Activated CD4-positive, alpha-beta T cell treated with anti-CD3 and anti-CD28 coated beads, Interleukin-2, amount 10 ng/mL, durations not matched to agents 24 days and 14 days (primary cell): ENCODE measurements at regions of chr1 and their contacts with region 1.

Region 1: DNA sequence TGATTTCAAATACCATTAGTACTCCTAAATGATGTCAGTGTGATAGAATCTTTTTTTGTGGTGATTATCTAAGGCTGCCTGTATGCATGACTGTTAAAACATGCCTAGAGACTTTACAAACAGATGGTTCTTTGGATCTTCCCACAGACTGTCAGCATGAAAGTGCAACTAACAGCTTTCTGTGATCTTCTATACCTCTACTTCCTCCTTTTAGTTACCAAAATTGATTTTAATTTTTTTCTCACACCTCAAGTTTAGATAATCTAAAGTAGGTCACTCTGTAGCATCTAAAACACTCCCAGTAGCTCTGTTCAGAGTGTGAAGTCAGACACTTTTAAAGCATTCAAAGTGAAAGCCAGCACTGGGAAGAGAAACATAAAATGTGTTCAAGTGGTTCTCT is 534.5 kb downstream of the PTPRC start:
- DNase-seq: peak; percentile 79
- H3K4me3 Mint-ChIP-seq: peak overlapping the region; percentile 16
- H3K27ac Mint-ChIP-seq: peak overlapping the region; percentile 60
- H3K4me1 Mint-ChIP-seq: peaks cover 44% of the 10 kb centered on the region
- H3K27me3 Mint-ChIP-seq: peaks cover 7% of the 10 kb centered on the region

Region 2: DNA sequence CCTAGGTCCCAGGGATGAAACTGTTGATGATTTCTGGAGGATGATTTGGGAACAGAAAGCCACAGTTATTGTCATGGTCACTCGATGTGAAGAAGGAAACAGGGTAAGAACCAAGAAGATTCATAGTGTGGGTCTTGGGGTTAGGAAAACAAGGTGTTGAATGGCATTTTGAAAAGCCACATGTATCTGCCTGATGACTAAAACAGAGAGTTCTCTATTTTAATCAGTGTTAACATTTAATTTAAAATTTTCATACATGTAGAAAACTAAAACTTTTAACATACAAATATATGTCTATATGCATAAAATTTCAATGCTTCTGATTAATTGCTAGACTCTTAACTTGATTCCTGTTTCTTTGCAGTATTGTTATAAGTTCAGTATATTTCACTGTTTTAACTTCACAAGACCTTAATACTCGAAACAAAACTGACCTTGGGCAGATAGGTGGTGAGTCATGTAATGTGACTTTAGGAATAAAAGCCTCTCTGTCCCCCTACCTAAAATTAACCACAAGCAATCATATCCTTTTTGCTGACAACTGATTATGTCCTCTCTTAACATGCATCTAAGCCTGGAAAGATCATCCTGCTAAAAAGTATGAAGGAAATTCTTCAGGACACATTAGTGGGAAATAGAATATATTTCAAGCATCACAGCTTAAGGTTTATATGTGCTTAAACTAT is 438.9 kb before region 1 on chr1:
- intact Hi-C with region 1: loop called (anchors 1 kb)
- DNase-seq: no peak
- H3K4me3 Mint-ChIP-seq: peak overlapping the region; percentile 41
- H3K27ac Mint-ChIP-seq: peak overlapping the region; percentile 90
- H3K4me1 Mint-ChIP-seq: peaks cover 50% of the 10 kb centered on the region
- H3K27me3 Mint-ChIP-seq: no peaks in the 10 kb centered on the region

Region 3: DNA sequence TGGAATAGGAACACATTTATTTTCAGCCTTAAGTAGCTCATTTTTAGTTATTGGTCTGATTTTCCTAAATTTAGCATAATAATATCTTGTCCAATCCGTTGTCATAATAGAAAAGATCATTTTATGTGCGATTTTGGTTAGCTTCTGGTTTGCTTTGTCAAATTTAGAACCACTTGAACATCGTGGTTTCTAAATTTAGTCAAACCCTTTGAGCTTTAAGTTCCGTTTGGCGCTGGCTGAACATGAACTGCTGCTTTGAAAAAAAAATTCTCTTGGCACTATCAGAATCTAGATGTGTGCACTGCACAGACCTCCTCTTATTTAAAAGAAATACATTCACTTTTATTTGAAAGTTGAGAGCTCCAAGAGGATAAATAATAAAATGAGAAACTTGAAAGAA is 163.9 kb before region 1 on chr1:
- intact Hi-C with region 1: loop called (anchors 1 kb)
- DNase-seq: peak; percentile 71
- H3K4me3 Mint-ChIP-seq: peak overlapping the region; percentile 50
- H3K27ac Mint-ChIP-seq: peak overlapping the region; percentile 62
- H3K4me1 Mint-ChIP-seq: peaks cover 43% of the 10 kb centered on the region
- H3K27me3 Mint-ChIP-seq: peaks cover 2% of the 10 kb centered on the region

Region 4: DNA sequence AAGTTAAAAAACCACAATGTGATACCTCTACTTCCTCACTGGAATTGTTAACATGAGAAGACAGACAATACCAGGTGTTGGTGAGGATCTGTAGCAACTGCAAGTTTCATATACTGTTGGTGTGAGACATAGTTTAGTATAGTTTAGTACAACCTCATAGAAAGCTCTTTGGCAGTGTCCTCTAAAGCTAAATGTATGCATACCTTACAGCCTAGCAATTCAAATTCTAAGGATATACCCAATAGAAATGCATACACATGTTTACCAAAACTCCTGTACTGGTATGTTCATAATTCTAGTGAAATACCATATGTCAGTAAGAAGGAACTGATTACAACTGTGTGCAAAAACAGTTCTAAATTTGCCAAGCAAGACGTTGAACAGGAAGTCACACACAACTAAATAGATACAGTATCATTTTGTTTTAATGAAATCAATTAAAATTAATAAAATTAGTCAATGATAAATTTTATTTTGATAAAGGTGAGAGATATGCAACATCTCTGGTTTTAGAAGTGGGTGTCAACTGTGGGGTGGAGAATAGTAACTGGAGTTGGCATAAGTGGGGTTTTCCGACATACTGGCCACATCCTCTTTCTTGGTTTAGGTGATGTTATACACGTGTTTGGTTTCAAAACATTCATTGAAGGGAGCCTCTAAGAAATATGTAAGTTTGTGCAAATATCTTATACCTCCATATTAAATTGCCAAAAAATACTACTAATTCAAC is 83.8 kb before region 1 on chr1:
- intact Hi-C with region 1: loop called (anchors 2 kb)
- DNase-seq: peak; percentile 87
- H3K4me3 Mint-ChIP-seq: peak overlapping the region; percentile 49
- H3K27ac Mint-ChIP-seq: peak overlapping the region; percentile 67
- H3K4me1 Mint-ChIP-seq: peaks cover 36% of the 10 kb centered on the region
- H3K27me3 Mint-ChIP-seq: no peaks in the 10 kb centered on the region

Region 5: GRCh38 chr1:199226163-199226562 is 52.8 kb after region 1 on chr1:
- intact Hi-C with region 1: loop called (anchors 1 kb)
- DNase-seq: peak; percentile 80
- H3K4me3 Mint-ChIP-seq: peak overlapping the region; percentile 47
- H3K27ac Mint-ChIP-seq: peak overlapping the region; percentile 48
- H3K4me1 Mint-ChIP-seq: peaks cover 14% of the 10 kb centered on the region
- H3K27me3 Mint-ChIP-seq: no peaks in the 10 kb centered on the region

Region 6: DNA sequence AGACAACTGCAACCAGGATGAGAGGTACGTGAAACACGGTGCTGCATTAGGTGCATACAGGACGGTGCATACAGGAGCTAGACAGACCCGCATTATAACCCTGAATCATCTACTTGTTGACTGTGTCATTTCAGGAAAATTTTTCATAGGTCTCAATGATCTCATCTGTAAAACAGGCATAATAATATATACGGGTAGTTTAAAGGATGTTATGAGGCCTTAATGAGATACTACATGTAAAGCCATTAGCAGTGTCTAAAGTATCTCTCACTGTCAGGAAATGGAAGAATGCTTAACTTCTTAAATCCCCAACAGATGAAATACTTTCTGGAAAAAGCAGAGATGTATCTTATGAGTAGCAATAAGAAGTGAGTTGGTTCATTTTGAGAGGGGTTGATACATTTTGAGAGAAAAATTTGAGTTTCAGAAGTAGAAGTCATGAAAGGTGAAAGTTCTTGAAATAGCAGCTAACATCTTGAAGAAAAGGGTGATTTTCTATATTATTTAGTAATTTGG is 135.0 kb after region 1 on chr1:
- intact Hi-C with region 1: loop called (anchors 5 kb)
- DNase-seq: no peak
- H3K4me3 Mint-ChIP-seq: no peak overlapping the region
- H3K27ac Mint-ChIP-seq: peak overlapping the region; percentile 30
- H3K4me1 Mint-ChIP-seq: peaks cover 10% of the 10 kb centered on the region
- H3K27me3 Mint-ChIP-seq: peaks cover 15% of the 10 kb centered on the region

Region 7: DNA sequence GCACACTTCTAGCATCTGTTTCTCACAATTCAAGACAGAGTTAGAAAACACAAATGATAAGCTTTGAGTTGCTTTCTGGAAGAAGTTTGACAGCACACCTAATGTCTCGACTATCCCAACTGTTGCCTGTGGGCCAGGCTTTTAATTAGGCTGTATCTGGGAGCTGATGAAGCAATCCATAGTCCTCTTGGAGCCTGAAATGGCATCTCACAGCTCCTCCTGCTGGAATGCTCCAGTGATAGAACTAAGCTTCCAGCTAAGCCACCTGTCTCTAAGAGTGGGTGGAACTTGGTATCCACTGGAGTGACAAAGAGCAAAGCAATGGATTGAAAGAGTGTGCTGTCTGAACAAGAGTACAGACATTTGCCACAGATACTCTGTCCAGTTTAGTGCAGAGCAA is 248.8 kb after region 1 on chr1:
- intact Hi-C with region 1: no loop called
- DNase-seq: no peak
- H3K4me3 Mint-ChIP-seq: no peak overlapping the region
- H3K27ac Mint-ChIP-seq: no peak overlapping the region
- H3K4me1 Mint-ChIP-seq: no peaks in the 10 kb centered on the region
- H3K27me3 Mint-ChIP-seq: peaks cover 11% of the 10 kb centered on the region